ENCODE measurements at regions of chr5 and their contacts with region 1.

Region 1: DNA sequence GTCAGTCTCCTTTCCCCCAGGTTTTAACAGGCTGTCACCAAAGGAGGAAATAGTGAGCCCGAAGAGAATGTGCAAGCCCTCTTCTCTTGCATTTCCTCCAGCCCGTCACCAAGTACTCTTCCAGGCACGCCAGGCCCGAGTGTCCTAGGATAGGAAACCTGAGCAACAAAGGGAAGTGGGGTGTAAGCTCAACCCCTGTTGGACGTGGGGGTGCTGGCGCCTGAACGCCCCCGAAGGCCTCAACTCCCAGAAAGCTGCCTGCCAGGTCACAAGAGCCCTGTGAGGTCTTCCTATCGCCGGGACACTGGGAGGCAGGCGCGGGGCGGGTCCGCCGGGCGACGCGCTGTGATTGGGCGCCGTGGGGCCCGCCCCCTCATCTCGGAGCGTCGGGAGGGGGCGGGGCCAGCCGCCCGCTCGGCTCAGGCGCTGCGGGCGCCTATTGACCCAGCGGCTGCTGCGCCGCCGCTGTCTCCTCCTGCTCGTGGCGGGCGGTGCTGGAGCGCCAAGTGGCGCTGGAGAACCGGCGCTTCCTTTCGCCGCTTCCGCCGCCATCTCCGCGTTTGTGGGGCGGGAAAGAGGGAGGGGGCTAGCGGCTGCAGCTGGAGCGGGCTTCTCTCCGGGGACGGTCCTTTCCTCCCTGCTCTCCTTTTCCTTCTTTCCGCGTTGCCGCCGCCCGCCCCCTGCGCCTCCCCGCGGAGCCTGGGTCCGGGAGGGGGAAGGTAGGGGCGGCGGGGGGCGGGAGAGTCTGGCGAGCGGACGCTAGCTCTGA is 572 bp upstream of the MAN2A1 start:
- DNase-seq: peak; percentile 77
- H3K4me3 Mint-ChIP-seq: peak overlapping the region; percentile 98
- H3K27ac Mint-ChIP-seq: peak overlapping the region; percentile 94
- H3K4me1 Mint-ChIP-seq: peaks cover 46% of the 10 kb centered on the region
- H3K27me3 Mint-ChIP-seq: no peaks in the 10 kb centered on the region

Region 2: GRCh38 chr5:108642167-108642906 is 1046.8 kb before region 1 on chr5:
- intact Hi-C with region 1: loop called (anchors 5 kb)
- DNase-seq: peak; percentile 11
- H3K4me3 Mint-ChIP-seq: no peak overlapping the region
- H3K27ac Mint-ChIP-seq: no peak overlapping the region
- H3K4me1 Mint-ChIP-seq: peaks cover 5% of the 10 kb centered on the region
- H3K27me3 Mint-ChIP-seq: peaks cover 7% of the 10 kb centered on the region

Region 3: DNA sequence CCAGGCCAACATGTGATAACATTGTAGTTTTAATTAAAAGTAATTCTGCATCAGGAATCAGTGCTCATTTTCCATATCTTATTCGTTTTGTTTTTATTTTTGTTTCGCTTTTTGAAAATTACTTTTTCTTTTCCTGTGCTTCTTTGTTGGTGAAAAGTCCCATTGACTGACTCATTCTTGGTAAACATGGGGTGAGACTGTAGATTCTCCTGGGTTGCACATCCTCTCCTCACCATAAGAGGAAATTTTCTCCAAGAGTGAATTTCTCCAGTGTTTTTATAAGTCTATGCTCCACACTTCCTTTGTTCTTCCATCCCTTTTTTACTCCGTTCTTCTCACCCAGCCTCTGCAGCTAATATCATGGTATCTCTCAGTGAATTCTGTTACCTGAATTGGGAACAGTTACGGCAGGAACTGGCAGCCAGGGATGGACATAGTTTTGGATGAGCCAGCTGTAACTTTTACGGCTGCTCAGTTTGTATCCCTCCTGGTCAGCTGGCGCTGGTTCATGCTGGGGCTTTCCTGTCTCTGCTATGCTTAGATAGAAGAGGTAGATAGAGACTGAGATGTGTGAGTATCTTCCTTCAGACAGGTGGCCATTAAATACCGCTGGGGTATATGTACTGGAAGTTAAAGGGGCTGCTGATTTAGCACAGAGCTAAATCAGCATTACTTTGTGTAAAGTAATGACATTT is 80.6 kb after region 1 on chr5:
- intact Hi-C with region 1: no loop called
- DNase-seq: no peak
- H3K4me3 Mint-ChIP-seq: no peak overlapping the region
- H3K27ac Mint-ChIP-seq: no peak overlapping the region
- H3K4me1 Mint-ChIP-seq: peaks cover 10% of the 10 kb centered on the region
- H3K27me3 Mint-ChIP-seq: no peaks in the 10 kb centered on the region

Region 4: DNA sequence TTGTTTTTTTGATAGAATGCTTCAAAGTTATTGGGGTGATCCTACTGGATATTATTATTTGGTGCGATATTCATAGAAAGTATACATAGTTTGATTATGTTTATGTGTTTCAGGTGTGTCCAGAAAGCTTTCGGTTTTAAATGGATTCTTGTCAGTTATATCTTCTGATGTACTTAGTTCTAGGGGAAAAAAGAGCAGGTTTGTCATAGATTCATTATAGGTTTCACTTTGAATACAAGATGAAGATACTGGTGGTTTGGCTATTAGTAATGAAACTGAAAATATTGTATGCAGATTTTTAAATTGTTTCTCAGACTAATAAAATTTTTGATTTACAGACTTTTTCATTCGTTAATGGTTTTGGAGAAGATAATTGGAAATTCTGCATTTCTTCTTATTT is 99.4 kb after region 1 on chr5:
- intact Hi-C with region 1: loop called (anchors 5 kb)
- DNase-seq: no peak
- H3K4me3 Mint-ChIP-seq: no peak overlapping the region
- H3K27ac Mint-ChIP-seq: no peak overlapping the region
- H3K4me1 Mint-ChIP-seq: peaks cover 26% of the 10 kb centered on the region
- H3K27me3 Mint-ChIP-seq: no peaks in the 10 kb centered on the region

Region 5: DNA sequence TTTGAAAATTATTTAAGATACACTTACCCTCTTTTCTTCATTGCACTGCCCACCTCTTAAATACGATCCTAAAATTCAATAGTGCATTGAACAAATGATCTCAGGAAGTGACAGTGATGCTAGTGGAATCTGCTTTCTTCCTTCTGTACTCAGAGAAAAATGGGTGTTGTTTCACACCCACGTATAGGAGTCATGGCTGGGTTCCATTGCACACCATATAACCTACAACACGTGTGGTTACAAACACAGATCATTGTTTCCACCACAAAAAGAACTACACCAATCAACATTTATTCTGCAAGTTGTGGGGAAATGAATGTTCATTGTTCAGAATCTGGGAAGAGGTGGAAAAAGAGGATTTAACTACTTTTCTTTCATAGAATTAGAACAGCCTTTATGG is 276.5 kb after region 1 on chr5:
- intact Hi-C with region 1: loop called (anchors 1 kb)
- DNase-seq: no peak
- H3K4me3 Mint-ChIP-seq: no peak overlapping the region
- H3K27ac Mint-ChIP-seq: peak overlapping the region; percentile 53
- H3K4me1 Mint-ChIP-seq: peaks cover 21% of the 10 kb centered on the region
- H3K27me3 Mint-ChIP-seq: peaks cover 2% of the 10 kb centered on the region

Region 6: GRCh38 chr5:110333384-110333783 is 644.2 kb after region 1 on chr5:
- intact Hi-C with region 1: loop called (anchors 2 kb)
- DNase-seq: no peak
- H3K4me3 Mint-ChIP-seq: no peak overlapping the region
- H3K27ac Mint-ChIP-seq: no peak overlapping the region
- H3K4me1 Mint-ChIP-seq: no peaks in the 10 kb centered on the region
- H3K27me3 Mint-ChIP-seq: peaks cover 4% of the 10 kb centered on the region

Region 7: DNA sequence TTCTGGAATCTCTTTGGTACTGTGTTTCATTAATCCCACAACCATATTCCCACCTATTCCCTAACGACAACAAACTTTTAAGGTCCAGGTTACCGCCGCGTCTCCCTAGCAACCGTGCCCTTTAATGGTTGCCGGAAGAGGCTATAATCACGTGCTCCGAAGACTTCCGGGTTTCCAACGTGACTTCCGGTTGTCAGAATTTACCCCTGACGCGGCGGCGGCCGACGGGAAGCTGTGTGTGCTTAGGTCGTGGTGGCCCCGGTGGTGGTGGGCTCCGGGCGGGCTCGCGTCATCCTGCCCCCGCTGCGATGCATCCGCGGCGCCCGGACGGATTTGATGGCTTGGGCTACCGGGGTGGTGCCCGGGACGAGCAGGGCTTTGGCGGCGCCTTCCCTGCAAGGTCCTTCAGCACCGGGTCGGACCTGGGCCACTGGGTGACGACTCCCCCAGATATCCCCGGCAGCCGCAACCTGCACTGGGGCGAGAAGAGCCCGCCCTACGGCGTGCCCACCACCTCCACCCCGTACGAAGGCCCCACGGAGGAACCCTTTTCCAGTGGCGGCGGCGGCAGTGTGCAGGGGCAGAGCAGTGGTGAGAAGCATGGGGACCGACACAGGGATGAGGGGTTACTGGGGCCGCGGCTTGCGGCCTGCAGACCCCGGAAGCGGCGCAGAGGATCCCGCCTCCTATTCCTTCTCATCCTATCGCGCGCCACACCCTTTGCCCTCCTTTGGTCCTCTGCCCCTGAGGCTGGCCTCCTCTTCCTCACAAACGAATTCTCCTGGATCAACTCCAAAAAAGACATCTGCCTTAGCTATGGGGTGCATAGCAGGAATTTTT is 1049.9 kb after region 1 on chr5 and contains the start of gene SLC25A46:
- intact Hi-C with region 1: loop called (anchors 1 kb)
- DNase-seq: peak; percentile 85
- H3K4me3 Mint-ChIP-seq: peak within 1 kb of the TSS; percentile 97
- H3K27ac Mint-ChIP-seq: peak within 1 kb of the TSS; percentile 96
- H3K4me1 Mint-ChIP-seq: peaks cover 39% of the 10 kb centered on the region
- H3K27me3 Mint-ChIP-seq: peaks cover 11% of the 10 kb centered on the region
- total RNA-seq, gene SLC25A46: 54.6 and 55.4 TPM in 2 replicates

Region 8: DNA sequence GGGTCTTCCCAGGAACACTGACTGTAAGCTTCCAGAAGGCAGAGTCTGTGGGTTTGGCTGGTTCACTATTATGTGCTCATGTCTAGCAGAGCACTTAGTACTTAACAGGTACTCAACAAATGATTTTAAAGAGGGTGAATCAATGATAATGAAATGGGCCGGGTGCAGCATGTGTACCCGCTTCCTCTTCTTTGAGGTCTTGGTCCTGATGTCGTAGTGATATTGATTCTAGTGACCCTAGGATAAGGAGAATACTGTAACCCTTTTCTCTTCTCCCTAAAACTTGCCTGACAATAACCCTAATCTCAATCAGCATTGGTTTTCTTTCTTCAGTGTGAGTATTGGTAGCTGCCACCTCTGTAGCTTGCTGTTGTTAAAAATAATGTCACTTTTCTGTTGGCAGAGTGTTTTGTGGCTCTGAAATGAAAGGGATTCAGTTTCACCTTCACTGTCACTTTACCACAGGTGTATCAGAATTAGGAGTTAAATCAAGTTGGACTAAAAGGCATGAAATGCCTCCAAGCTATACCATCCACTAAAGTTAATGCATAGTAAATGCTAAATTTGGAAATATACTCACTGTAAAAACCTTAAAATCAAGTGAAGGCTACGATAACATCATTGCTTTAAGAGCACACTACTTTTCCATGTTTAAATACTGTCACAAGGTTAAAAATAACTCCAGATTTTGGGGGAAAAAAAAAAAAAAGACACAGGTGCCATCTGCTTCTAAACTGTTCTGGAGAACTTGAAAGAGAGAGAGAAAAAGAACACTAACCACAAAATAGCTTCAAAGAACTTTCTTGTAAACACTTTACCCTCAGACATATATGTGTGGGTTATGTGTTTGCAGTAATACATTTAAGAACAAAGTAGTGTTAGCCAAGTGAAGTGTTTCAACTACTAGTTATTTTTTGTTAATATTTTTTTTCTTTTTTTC is 1541.0 kb after region 1 on chr5:
- intact Hi-C with region 1: loop called (anchors 5 kb)
- DNase-seq: no peak
- H3K4me3 Mint-ChIP-seq: peak overlapping the region; percentile 79
- H3K27ac Mint-ChIP-seq: peak overlapping the region; percentile 96
- H3K4me1 Mint-ChIP-seq: peaks cover 97% of the 10 kb centered on the region
- H3K27me3 Mint-ChIP-seq: no peaks in the 10 kb centered on the region

Measured in activated T-helper 1 cell treated with anti-CD3 and anti-CD28 coated beads, Interleukin-12 subunit alpha, Interleukin-12 subunit beta, Interleukin-2, Interleukin-4 antibody, amounts not matched to agents 30 ng/mL and 10 ng/mL and 1 ng/mL, durations not matched to agents 14 hours and 24 hours and 36 hours (primary cell).